ENCODE measurements at regions of chr22 and their contacts with region 1.

Region 1: DNA sequence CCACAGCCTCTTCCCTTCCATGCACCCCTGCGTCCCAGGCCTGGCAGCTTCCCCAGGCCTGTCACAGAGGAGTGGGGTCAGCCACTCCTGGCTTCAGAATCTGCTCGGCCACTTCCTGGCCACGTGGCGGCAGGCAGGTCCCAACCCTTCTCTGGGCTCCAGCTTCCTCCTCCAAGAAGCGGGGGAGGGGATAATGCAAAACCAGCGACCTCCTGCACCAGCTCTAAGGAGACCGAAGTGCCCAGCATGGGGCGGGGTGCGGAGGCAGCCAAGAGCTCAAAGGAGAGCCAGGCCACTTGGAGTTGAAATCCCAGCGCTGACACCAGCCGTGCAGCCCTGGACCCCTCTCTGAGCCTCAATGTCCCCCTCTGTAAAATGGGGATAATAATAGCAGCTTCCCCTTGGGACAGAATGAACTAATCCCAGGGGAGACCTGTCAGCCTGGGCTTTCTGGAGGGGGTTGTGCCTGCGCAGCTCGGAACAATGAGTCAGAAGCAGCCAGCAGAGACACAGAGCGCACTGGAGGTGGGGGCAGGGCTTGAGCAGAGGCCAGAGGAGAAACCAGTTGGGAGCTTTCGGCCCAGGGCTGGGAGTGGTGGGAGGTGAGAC is 22.8 kb upstream of the PICK1 start:
- DNase-seq: peak; percentile 15
- ATAC-seq: peak; percentile 83
- H3K4me3 ChIP-seq: no peak overlapping the region
- H3K27ac ChIP-seq: no peak overlapping the region
- H3K4me1 ChIP-seq: peaks cover 7% of the 10 kb centered on the region; the same call in 1 of the 2 replicates
- H3K27me3 ChIP-seq: no peaks in the 10 kb centered on the region; a peak in 1 of 4 replicates
- CTCF ChIP-seq: no peak
- EP300 ChIP-seq: no peak
- POLR2A ChIP-seq: no peak
- RAD21 ChIP-seq: no peak

Region 2: DNA sequence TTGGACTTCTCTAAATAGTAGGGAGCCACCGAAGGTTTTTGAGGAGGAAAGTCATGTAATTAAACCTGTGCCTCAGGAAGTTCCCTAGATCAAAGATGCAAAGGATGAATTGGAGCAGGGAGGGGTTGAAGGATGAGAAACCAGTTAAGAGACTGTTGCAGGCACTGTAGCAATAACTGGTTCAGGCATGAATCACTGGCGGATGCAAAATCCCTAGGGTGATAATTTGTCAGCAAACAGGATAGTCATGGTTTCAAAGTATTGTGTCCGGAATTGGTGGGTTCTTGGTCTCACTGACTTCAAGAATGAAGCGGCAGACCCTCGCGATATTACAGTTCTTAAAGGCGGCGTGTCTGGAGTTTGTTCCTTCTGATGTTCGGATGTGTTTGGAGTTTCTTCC is 317.7 kb before region 1 on chr22:
- CTCF ChIA-PET with region 1: no interaction called
- POLR2A ChIA-PET with region 1: interaction called, 10 read pairs
- RAD21 ChIA-PET with region 1: no interaction called
- SMC1A ChIA-PET with region 1: no interaction called
- in situ Hi-C with region 1: no loop called
- intact Hi-C with region 1: no loop called
- DNase-seq: no peak
- ATAC-seq: no peak
- H3K4me3 ChIP-seq: no peak overlapping the region
- H3K27ac ChIP-seq: no peak overlapping the region
- H3K4me1 ChIP-seq: no peaks in the 10 kb centered on the region
- H3K27me3 ChIP-seq: no peaks in the 10 kb centered on the region
- CTCF ChIP-seq: no peak
- EP300 ChIP-seq: no peak
- POLR2A ChIP-seq: no peak
- RAD21 ChIP-seq: no peak

Measured in GM12878 (cell line).